Activated CD4-positive, alpha-beta T cell treated with anti-CD3 and anti-CD28 coated beads for 36 hours (primary cell): ENCODE measurements at regions of chr13 and their contacts with region 1.

Region 1: GRCh38 chr13:70960841-70961443 is 852.7 kb upstream of the KLHL1 start:
- DNase-seq: no peak
- ATAC-seq: no peak
- H3K4me3 Mint-ChIP-seq: no peak overlapping the region
- H3K27ac Mint-ChIP-seq: no peak overlapping the region
- H3K4me1 Mint-ChIP-seq: no peaks in the 10 kb centered on the region
- H3K27me3 Mint-ChIP-seq: no peaks in the 10 kb centered on the region

Region 2: GRCh38 chr13:70623239-70623638 is 337.7 kb before region 1 on chr13:
- CTCF ChIA-PET with region 1: no interaction called
- POLR2A ChIA-PET with region 1: no interaction called
- intact Hi-C with region 1: loop called in 1 of 2 experiments (anchors 1 kb)
- DNase-seq: no peak
- ATAC-seq: no peak
- H3K4me3 Mint-ChIP-seq: no peak overlapping the region
- H3K27ac Mint-ChIP-seq: no peak overlapping the region
- H3K4me1 Mint-ChIP-seq: no peaks in the 10 kb centered on the region
- H3K27me3 Mint-ChIP-seq: no peaks in the 10 kb centered on the region

Region 3: DNA sequence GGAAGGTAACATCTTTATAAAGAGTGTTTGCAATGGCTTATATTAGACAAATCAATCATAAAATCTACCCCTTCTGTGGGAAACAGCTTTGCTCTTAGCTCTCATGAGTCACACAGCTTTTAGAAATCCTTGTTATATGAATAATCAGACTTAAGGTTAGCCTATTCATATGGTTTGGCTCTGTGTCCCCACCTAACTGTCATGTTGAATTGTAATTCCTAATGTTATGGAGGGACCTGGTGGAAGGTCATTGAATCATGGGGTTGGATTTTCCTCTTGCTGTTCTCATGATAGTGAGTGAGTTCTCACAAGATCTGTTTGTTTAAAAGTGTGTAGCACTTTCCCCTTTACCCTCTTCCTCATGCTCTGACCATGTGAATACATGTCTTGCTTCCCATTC is 148.5 kb before region 1 on chr13:
- CTCF ChIA-PET with region 1: no interaction called
- POLR2A ChIA-PET with region 1: no interaction called
- intact Hi-C with region 1: no loop called
- DNase-seq: no peak
- ATAC-seq: no peak
- H3K4me3 Mint-ChIP-seq: no peak overlapping the region
- H3K27ac Mint-ChIP-seq: no peak overlapping the region
- H3K4me1 Mint-ChIP-seq: no peaks in the 10 kb centered on the region
- H3K27me3 Mint-ChIP-seq: no peaks in the 10 kb centered on the region